OCI-LY7 (cell line): ENCODE measurements at regions of chr14 and their contacts with region 1.

Region 1: DNA sequence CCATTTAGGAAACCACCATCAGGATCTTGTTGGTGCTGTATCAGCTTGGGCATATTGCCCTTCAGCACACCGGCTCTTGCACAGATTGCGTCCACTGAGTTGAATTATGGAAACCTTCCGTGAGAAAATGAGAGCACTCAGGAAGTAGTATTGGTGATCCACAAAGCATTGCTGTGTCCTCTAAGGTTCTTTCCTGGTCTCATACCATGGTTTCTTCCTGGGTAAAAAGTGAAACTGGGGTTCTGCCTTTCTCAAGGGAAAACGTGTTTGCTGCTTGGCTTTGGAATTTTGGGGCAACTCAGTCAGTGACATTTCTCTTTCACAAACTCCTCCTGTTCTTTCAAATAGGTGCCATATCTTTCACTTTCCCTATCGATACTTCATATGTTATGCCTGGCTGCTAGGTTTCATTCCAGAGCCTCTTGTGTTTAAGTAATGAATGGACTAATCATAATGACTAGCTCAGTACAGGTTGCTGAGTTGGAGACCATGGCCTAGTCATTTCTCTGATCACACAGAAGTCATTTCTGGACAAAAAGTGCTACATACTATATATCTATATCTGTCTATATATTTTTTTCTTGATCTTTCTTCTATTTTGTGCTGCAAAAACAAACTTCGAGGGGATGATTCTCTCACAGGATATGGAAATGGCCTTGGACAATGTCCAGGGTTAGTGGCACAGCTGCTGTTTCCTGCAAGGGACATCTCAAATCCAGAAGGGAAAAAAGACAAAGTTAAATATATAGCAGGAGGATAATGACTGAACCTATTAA is 423.4 kb downstream of the ZFP36L1 start:
- DNase-seq: no peak
- H3K4me3 ChIP-seq: peak overlapping the region; percentile 13
- H3K27ac ChIP-seq: peak overlapping the region; percentile 34
- H3K4me1 ChIP-seq: peaks cover 98% of the 10 kb centered on the region
- CTCF ChIP-seq: no peak

Region 2: DNA sequence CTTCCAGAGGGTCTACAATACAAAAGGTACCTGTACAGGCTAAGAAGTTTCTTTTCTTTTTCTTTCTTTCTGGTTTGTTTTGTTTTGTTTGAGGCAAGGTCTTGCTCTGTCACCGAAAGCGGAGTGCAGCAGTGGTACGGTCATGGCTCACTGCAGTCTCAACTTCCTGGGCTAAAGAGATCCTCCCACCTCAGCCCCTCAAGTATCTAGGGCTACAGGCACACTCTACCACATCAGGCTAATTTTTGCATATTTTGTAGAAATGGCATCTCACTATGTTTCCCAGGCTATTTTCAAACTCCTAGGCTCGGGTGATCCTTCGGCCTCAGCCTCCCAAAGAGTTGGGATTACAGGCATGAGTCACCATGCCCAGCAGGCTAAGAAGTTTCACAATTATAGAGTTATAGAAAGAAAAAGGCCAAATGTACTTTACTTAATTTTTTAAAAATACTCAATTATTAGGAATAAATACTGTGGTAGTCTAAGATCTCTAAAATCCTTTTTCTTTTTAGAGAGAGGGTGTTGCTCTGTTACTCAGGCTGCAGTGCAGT is 766.4 kb before region 1 on chr14:
- CTCF ChIA-PET with region 1: no interaction called
- POLR2A ChIA-PET with region 1: no interaction called
- intact Hi-C with region 1: no loop called
- DNase-seq: peak; percentile 68
- H3K4me3 ChIP-seq: no peak overlapping the region
- H3K27ac ChIP-seq: no peak overlapping the region
- H3K4me1 ChIP-seq: peaks cover 22% of the 10 kb centered on the region
- CTCF ChIP-seq: no peak

Region 3: DNA sequence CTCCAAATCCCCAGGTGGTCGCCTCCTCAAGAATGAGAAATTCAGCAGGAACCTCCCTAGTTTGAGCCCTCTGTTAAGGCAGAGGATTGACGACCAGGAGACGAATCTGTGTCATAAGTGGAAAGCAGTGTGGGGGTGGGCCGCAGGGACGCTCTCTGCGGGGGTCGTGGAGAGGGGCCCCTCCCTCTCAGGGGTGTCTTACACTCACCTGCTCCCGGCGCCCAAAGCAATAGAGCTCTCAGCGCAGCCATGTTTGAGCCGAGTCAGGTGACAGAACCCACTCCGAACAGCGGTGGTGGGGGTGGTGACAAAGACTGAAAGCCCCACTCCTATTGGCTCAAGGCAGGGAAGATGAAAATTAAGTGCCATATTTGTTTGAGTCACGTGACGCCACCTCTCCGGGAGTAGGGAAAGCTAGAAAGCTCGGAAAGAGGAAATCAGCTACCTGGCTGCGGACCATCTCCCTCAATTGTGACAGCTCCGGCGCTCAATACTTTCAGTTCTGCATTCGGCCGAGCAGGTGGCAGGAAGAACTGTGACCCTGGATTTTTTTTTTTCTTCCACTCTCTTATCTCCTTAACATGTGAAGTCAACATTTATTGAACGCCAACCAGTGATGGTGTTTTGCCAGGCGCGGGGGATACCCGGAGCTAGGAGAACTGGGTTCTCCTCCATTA is 553.0 kb before region 1 on chr14 and contains the start of gene ZFYVE26:
- CTCF ChIA-PET with region 1: no interaction called
- POLR2A ChIA-PET with region 1: no interaction called
- intact Hi-C with region 1: loop called (anchors 5 kb)
- DNase-seq: peak; percentile 99
- H3K4me3 ChIP-seq: peak within 1 kb of the TSS; percentile 79
- H3K27ac ChIP-seq: peak within 1 kb of the TSS; percentile 99
- H3K4me1 ChIP-seq: peaks cover 52% of the 10 kb centered on the region
- CTCF ChIP-seq: no peak
- total RNA-seq, gene ZFYVE26: 12.0 and 16.3 TPM in 2 replicates

Region 4: GRCh38 chr14:68268197-68268596 is 101.3 kb before region 1 on chr14:
- CTCF ChIA-PET with region 1: no interaction called
- POLR2A ChIA-PET with region 1: interaction called, 7 read pairs
- intact Hi-C with region 1: loop called (anchors 5 kb)
- DNase-seq: peak; percentile 93
- H3K4me3 ChIP-seq: peak overlapping the region; percentile 42
- H3K27ac ChIP-seq: peak overlapping the region; percentile 93
- H3K4me1 ChIP-seq: peaks cover 91% of the 10 kb centered on the region
- CTCF ChIP-seq: no peak

Region 5: GRCh38 chr14:68300608-68301007 is 68.9 kb before region 1 on chr14:
- CTCF ChIA-PET with region 1: no interaction called
- POLR2A ChIA-PET with region 1: no interaction called
- intact Hi-C with region 1: no loop called
- DNase-seq: no peak
- H3K4me3 ChIP-seq: no peak overlapping the region
- H3K27ac ChIP-seq: no peak overlapping the region
- H3K4me1 ChIP-seq: peaks cover 33% of the 10 kb centered on the region
- CTCF ChIP-seq: no peak

Region 6: DNA sequence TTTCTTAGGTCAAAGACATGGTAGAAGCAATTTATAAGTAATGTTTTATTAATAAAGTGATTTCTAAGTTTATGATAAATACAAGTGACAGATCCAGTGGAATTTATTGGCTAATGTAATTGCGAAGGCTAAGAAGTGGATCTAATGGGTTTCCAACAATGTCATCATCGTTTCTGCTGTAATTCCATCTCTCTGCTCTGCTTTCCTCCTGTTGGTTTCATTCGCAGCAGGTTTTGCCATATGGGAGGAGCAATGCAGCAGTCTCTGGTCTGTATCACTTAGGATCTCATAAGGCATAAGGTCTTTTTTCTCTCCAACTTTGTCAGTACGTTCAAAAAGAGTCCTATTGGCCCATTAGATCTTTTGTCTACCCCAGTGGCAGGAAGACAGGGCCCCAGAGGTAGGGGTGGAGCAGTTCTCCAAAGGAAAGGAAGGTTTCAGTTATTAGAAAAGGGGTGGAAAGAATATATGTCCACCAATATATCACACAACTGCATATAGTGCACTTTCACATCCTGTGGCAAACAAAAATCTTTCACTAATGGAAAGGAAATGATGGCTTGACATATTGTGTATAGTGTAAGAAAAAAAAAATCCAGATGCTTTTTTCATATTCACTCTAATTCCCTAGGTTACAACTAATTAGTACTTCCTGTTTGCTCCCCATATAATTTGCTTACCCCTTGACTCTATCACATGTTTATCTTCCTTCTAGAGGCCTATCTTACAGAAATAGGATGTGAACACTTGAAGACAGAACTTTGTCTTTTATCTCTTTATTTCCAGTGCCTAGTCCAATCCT is 27.9 kb before region 1 on chr14:
- CTCF ChIA-PET with region 1: no interaction called
- POLR2A ChIA-PET with region 1: no interaction called
- intact Hi-C with region 1: no loop called
- DNase-seq: peak; percentile 51
- H3K4me3 ChIP-seq: peak overlapping the region; percentile 7
- H3K27ac ChIP-seq: peak overlapping the region; percentile 25
- H3K4me1 ChIP-seq: peaks cover 49% of the 10 kb centered on the region
- CTCF ChIP-seq: no peak

Region 7: DNA sequence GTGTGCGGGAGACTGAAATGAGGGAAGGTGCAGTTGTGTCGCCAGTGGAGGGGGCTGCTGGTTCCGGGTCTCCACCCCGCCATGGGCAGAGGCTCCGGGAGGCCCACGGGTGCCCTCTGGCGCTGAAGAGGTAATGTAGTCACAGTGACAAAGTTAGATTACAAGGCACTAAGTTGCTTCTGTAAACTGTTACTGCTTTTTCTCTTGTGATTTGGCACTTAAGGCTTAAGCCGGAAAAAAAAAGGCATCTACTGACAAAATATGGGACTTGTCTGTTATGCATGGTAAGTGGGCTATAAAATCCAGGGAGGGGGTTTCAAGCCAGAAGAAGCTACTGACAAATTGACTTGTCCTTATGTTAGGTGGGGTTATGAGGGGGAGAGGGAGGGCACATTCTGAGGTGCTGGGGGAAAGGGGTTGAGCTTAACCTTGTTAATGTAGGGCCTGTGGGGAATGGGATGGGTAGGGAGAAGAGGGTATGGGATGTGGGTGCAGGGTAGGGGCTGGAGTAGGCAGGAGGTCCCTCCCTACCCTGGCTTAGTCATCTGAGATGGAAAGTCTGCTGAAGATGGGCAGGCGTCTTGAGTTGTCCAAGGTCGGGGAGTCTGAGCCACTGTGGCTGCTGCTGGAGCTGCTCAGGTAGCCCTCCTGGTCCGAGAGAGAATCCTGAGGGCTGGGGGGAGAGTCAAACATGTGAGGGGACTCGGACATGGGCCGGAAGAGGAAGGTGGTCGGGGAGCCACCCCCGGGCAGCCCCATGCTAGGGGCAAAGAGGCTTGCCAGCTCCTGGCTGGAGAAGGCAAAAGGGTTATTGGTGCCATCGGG is 419.7 kb after region 1 on chr14:
- CTCF ChIA-PET with region 1: no interaction called
- POLR2A ChIA-PET with region 1: interaction called, 11 read pairs
- intact Hi-C with region 1: loop called (anchors 2 kb)
- DNase-seq: peak; percentile 89
- H3K4me3 ChIP-seq: peak overlapping the region; percentile 87
- H3K27ac ChIP-seq: peak overlapping the region; percentile 92
- H3K4me1 ChIP-seq: peaks cover 56% of the 10 kb centered on the region
- CTCF ChIP-seq: peak; percentile 90